Activated CD4-positive, alpha-beta T cell treated with anti-CD3 and anti-CD28 coated beads, Interleukin-2, amount 10 ng/mL, durations not matched to agents 24 days and 14 days (primary cell): ENCODE measurements at regions of chr7 and their contacts with region 1.

Region 1: DNA sequence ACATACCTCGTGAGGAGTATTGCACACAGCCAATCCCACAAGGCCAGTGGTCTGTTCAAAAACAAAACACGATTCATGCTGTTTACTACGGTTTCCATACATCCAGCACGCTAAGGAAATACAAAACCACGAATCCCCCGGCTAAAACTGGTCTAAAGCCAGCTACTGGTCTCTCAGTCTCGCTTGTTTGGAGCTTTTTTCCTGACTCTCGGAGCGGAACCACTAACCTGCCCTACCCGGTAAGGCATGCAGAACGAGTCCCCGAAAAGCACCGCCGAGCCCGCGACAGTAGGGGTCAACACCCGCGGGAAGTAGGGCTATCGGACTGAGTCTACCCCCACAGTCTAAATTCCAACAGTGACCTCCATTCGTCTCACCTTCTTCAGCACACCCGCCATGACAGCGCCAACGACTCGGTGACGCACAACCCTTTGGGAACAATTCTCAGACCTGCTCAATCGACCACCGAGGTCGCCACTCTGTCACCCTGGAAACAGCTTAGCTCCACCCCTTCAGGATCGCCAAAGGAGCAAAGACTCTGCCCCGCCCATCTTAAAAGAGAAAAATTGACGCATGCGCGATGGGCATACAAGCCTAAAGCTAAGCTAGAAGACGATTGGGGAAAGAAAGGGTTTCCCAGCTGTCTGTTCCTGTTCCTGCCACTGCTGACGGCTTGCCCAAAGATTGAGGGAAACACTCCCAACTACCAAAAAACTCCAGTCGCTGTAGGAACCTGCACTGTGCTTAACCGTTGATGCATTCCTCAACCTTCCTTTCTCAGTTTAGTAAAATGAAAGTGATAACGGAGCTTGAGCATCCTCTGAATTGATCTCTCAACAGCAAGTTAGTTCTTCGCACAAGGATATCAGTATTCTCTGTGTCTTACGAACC is at the start of gene NDUFA5:
- DNase-seq: peak; percentile 99
- H3K4me3 Mint-ChIP-seq: no peak within 1 kb of the TSS
- H3K27ac Mint-ChIP-seq: no peak within 1 kb of the TSS
- H3K4me1 Mint-ChIP-seq: peaks cover 2% of the 10 kb centered on the region
- H3K27me3 Mint-ChIP-seq: peaks cover 8% of the 10 kb centered on the region
- total RNA-seq, gene NDUFA5: 56.1 and 62.1 TPM in 2 replicates

Region 2: DNA sequence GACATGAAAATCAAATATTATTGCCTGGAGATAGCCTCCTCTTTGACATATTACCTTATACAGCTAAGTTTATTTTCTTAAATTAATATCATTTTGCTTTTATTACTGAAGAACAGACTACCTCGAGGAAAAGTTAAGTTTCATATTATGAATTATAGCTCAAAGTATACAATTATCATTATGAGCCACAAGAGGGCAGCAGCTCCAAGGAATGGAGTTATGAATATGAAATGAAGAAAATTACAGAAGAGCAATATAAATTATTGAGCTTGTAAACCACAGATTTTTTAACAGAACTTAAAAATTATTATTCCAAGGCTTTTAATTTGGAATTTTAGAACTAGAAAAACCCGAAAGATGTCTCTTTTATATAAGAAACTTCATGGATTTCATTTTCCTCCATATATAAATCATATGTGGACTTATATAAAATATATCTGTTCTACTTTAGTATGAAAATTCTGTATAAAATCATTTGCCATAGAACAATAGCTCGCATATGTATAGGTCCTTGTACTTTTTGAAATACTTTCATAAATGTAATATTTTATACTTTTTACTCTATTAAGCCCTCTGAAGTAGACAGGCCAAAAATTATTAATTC is 63.3 kb before region 1 on chr7:
- intact Hi-C with region 1: loop called (anchors 1 kb)
- DNase-seq: peak; percentile 73
- H3K4me3 Mint-ChIP-seq: no peak overlapping the region
- H3K27ac Mint-ChIP-seq: no peak overlapping the region
- H3K4me1 Mint-ChIP-seq: no peaks in the 10 kb centered on the region
- H3K27me3 Mint-ChIP-seq: peaks cover 6% of the 10 kb centered on the region

Region 3: GRCh38 chr7:123534383-123535260 is 23.0 kb before region 1 on chr7 and contains the start of gene IQUB:
- intact Hi-C with region 1: loop called (anchors 1 kb)
- DNase-seq: peak; percentile 97
- H3K4me3 Mint-ChIP-seq: peak within 1 kb of the TSS; percentile 97
- H3K27ac Mint-ChIP-seq: peak within 1 kb of the TSS; percentile 90
- H3K4me1 Mint-ChIP-seq: peaks cover 22% of the 10 kb centered on the region
- H3K27me3 Mint-ChIP-seq: peaks cover 29% of the 10 kb centered on the region
- total RNA-seq, gene IQUB: 0.05 TPM in 1 of 2 replicates, not detected in the other

Region 4: GRCh38 chr7:123712619-123713018 is 155.0 kb after region 1 on chr7:
- intact Hi-C with region 1: loop called (anchors 5 kb)
- DNase-seq: no peak
- H3K4me3 Mint-ChIP-seq: peak overlapping the region; percentile 16
- H3K27ac Mint-ChIP-seq: peak overlapping the region; percentile 3
- H3K4me1 Mint-ChIP-seq: peaks cover 45% of the 10 kb centered on the region
- H3K27me3 Mint-ChIP-seq: no peaks in the 10 kb centered on the region

Region 5: GRCh38 chr7:123901044-123901443 is 343.4 kb after region 1 on chr7:
- intact Hi-C with region 1: no loop called
- DNase-seq: no peak
- H3K4me3 Mint-ChIP-seq: no peak overlapping the region
- H3K27ac Mint-ChIP-seq: no peak overlapping the region
- H3K4me1 Mint-ChIP-seq: no peaks in the 10 kb centered on the region
- H3K27me3 Mint-ChIP-seq: no peaks in the 10 kb centered on the region

Region 6: DNA sequence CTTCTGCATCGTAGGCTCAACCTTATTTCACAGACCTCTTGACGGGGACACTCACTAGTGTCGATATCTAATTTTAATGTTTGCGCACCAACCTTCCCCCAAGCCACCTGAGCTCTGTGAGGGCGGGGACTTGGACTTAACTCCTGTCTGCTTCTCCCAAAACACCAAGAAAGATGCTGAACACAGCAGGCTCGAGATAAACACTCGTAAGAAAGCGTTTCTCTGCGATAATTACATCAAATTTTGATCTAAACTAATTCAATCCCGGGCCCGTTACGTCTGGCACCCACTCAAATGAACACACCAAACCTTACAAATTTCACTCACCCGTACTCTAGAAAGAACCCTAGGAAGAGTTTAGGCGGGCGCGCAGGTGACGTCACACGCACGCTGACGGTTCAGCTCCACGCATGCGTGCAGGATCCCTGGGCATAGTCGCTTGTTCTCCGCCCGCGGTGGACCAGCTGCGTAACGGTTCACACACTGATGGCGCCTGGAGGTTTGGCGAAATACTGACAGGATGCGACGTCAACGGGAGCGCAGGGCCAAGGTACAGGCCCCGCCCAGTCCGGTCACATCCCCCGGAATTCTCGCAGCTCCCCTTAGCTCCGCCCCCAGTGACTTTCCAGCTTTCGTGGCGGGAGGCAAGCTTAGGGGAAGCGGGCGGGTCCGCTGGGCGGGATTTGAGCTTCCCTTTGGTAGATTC is 1372.0 kb after region 1 on chr7 and contains the start of gene POT1:
- intact Hi-C with region 1: loop called (anchors 10 kb)
- DNase-seq: peak; percentile 98
- H3K4me3 Mint-ChIP-seq: peak within 1 kb of the TSS; percentile 98
- H3K27ac Mint-ChIP-seq: peak within 1 kb of the TSS; percentile 97
- H3K4me1 Mint-ChIP-seq: peaks cover 30% of the 10 kb centered on the region
- H3K27me3 Mint-ChIP-seq: peaks cover 4% of the 10 kb centered on the region
- total RNA-seq, gene POT1: 31.0 TPM in 2 replicates